Endothelial cell of umbilical vein (primary cell): ENCODE measurements at regions of chr5 and their contacts with region 1.

Region 1: GRCh38 chr5:140042643-140043500 is at the start of gene NRG2:
- DNase-seq: peak; percentile 65
- H3K4me3 ChIP-seq: peak within 1 kb of the TSS; percentile 23 to 54 (median 44)
- H3K27ac ChIP-seq: no peak within 1 kb of the TSS
- H3K4me1 ChIP-seq: peaks cover 27% of the 10 kb centered on the region
- H3K27me3 ChIP-seq: peaks cover 3 to 12% of the 10 kb centered on the region in 2 experiments
- CTCF ChIP-seq: peak; percentile 32 to 72
- POLR2A ChIP-seq: no peak
- total RNA-seq, gene NRG2: 0.30 and 0.42 TPM in 2 replicates

Region 2: DNA sequence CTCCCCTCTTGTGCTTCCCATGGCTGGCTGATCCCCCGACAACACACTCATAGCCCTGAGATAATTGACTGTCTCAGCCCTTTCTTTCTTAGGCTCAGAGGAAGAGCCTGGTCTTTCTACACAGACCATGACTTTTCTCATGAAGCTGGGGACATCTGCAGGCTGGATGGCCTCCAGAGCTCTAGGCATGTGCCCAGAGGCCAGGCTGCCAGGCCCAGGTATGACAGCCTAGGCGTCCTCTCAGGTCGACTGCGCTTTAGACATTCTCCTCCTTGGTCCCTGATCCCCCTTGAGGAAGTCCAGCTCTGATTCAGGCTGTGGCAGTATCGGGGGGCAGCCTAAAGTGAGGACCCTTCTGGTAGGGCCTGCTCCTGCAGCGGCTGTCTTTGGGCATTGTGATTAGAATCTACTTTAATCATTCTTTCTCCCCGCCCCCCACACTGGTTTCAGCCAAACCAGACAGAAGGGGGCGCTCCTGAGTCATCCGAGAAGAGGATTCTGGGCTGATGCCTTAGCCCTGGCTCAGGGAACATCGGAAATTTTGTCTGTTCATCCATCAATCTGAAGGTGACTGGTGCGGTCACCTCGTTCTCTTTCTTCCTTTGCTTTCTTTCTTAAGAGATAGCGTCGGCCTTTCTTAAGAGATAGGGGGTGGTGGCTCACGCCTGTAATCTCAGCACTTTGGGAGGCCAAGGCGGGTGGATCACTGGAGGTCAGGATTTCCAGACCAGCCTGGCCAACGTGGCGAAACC is 1401.1 kb before region 1 on chr5:
- CTCF ChIA-PET with region 1: no interaction called
- POLR2A ChIA-PET with region 1: no interaction called
- dilution Hi-C with region 1: no loop called
- intact Hi-C with region 1: no loop called
- DNase-seq: peak; percentile 64
- H3K4me3 ChIP-seq: no peak overlapping the region
- H3K27ac ChIP-seq: no peak overlapping the region
- H3K4me1 ChIP-seq: no peaks in the 10 kb centered on the region
- H3K27me3 ChIP-seq: peaks cover 0 to 6% of the 10 kb centered on the region in 2 experiments
- CTCF ChIP-seq: peak; percentile 79 to 86
- POLR2A ChIP-seq: no peak

Region 3: DNA sequence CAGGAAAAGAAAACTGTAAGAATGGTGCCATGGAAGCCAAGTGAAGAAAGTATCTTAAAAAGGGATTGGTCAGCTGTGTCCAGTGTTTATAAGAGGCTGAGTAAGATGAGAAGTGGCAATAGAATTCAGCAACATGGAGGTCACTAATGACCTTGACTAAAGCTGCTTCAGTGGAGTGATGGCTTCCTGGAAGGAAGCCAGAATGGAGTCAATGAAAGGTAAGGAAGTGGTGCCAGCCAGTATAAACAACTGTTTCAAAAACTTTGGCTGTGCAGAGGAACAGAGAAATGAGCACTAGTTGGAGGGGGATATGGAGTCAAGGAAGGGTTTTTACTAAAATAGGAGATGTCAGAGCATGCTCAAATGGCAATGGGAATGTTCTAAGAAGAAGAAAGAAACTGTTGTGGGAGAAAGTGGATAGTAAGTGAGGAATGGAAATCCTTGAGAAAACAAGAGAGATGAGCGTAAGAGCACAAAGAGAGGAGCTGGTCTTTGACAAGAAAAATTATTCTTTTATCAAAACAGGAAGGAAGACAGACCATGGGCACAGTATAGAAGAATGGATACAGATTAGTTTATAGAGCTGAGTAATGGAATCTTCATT is 11.3 kb after region 1 on chr5:
- CTCF ChIA-PET with region 1: interaction called, 36 read pairs
- POLR2A ChIA-PET with region 1: no interaction called
- dilution Hi-C with region 1: no loop called
- intact Hi-C with region 1: loop called (anchors 1 kb)
- DNase-seq: peak; percentile 94
- H3K4me3 ChIP-seq: peak overlapping the region in 1 of 3 experiments; percentile 44
- H3K27ac ChIP-seq: no peak overlapping the region
- H3K4me1 ChIP-seq: peaks cover 16% of the 10 kb centered on the region
- H3K27me3 ChIP-seq: peaks cover 13 to 31% of the 10 kb centered on the region in 2 experiments
- CTCF ChIP-seq: no peak
- POLR2A ChIP-seq: no peak

Region 4: GRCh38 chr5:140107312-140108083 is 64.6 kb after region 1 on chr5:
- CTCF ChIA-PET with region 1: interaction called, 5 read pairs
- POLR2A ChIA-PET with region 1: no interaction called
- dilution Hi-C with region 1: no loop called
- intact Hi-C with region 1: loop called (anchors 2 kb)
- DNase-seq: peak; percentile 94
- H3K4me3 ChIP-seq: peak overlapping the region; percentile 51 to 77 (median 56)
- H3K27ac ChIP-seq: peak overlapping the region; percentile 53
- H3K4me1 ChIP-seq: peaks cover 14% of the 10 kb centered on the region
- H3K27me3 ChIP-seq: peaks cover 33 to 67% of the 10 kb centered on the region in 2 experiments
- CTCF ChIP-seq: peak in 1 of 2 donors; percentile 35
- POLR2A ChIP-seq: peak; percentile 74

Region 5: GRCh38 chr5:140202078-140202477 is 159.2 kb after region 1 on chr5:
- CTCF ChIA-PET with region 1: no interaction called
- POLR2A ChIA-PET with region 1: no interaction called
- dilution Hi-C with region 1: no loop called
- intact Hi-C with region 1: no loop called
- DNase-seq: no peak
- H3K4me3 ChIP-seq: no peak overlapping the region
- H3K27ac ChIP-seq: no peak overlapping the region
- H3K4me1 ChIP-seq: peaks cover 14% of the 10 kb centered on the region
- H3K27me3 ChIP-seq: no peaks in the 10 kb centered on the region
- CTCF ChIP-seq: no peak
- POLR2A ChIP-seq: no peak